Activated T-helper 1 cell treated with anti-CD3 and anti-CD28 coated beads, Interleukin-12 subunit alpha, Interleukin-12 subunit beta, Interleukin-2, Interleukin-4 antibody, amounts not matched to agents 30 ng/mL and 10 ng/mL and 1 ng/mL, durations not matched to agents 14 hours and 24 hours and 36 hours (primary cell): ENCODE measurements at regions of chr22 and their contacts with region 1.

Region 1: GRCh38 chr22:21867528-21868266 is at the start of gene MAPK1:
- DNase-seq: peak; percentile 89
- H3K4me3 Mint-ChIP-seq: peak within 1 kb of the TSS; percentile 94
- H3K27ac Mint-ChIP-seq: peak within 1 kb of the TSS; percentile 95
- H3K4me1 Mint-ChIP-seq: peaks cover 41% of the 10 kb centered on the region
- H3K27me3 Mint-ChIP-seq: peaks cover 15% of the 10 kb centered on the region
- total RNA-seq, gene MAPK1: 80.2 and 91.3 TPM in 2 replicates

Region 2: GRCh38 chr22:21712894-21713712 is 154.6 kb before region 1 on chr22:
- intact Hi-C with region 1: loop called (anchors 5 kb)
- DNase-seq: peak; percentile 36
- H3K4me3 Mint-ChIP-seq: no peak overlapping the region
- H3K27ac Mint-ChIP-seq: no peak overlapping the region
- H3K4me1 Mint-ChIP-seq: peaks cover 7% of the 10 kb centered on the region
- H3K27me3 Mint-ChIP-seq: peaks cover 9% of the 10 kb centered on the region

Region 3: GRCh38 chr22:21760640-21761039 is 107.1 kb before region 1 on chr22:
- intact Hi-C with region 1: loop called (anchors 1 kb)
- DNase-seq: no peak
- H3K4me3 Mint-ChIP-seq: no peak overlapping the region
- H3K27ac Mint-ChIP-seq: peak overlapping the region; percentile 25
- H3K4me1 Mint-ChIP-seq: peaks cover 57% of the 10 kb centered on the region
- H3K27me3 Mint-ChIP-seq: no peaks in the 10 kb centered on the region

Region 4: DNA sequence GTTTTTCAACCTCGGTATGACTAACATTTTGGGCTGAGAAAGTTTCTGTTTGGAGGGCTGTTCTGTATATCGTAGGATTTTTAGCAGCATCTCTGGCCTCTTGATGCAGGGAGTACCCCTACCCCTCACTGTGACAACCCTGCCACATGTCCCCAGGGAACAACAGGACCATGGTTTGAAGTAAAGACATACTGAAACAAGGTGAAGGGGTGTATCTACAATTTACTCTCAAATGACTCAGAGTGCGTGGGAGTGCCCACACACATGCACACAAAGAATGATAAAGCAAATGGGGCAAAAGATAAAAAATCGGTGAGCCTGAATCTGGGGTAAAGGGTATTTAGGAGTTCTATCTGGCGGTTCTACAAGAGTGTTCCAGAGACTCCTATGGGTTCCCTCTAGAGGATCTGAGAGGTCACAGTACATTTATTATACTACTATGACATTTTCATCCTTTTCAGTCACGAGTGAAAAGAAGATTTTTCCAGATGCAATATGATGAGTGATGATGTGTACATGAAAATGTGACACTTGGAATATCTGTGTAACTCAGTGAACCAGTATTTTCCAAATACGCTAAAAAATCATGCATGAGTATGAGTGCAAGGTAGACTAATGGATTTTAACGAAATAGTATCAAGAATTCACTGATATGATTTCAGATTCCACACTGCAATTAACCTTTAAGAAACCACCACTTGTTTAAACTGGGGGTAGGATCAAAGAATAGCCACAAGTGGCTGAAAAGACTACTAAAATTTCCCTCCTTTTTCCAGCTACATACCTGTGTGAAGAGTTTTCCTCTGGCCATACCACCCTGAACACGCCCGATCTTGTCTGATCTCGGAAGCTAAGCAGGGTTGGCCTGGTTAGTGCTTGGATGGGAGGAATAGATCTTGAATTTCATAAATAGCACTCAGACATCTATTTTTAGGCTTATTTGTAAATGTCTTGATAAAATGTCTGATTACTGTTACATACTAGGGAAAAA is 75.8 kb before region 1 on chr22:
- intact Hi-C with region 1: loop called (anchors 1 kb)
- DNase-seq: peak; percentile 12
- H3K4me3 Mint-ChIP-seq: no peak overlapping the region
- H3K27ac Mint-ChIP-seq: peak overlapping the region; percentile 72
- H3K4me1 Mint-ChIP-seq: peaks cover 12% of the 10 kb centered on the region
- H3K27me3 Mint-ChIP-seq: no peaks in the 10 kb centered on the region

Region 5: DNA sequence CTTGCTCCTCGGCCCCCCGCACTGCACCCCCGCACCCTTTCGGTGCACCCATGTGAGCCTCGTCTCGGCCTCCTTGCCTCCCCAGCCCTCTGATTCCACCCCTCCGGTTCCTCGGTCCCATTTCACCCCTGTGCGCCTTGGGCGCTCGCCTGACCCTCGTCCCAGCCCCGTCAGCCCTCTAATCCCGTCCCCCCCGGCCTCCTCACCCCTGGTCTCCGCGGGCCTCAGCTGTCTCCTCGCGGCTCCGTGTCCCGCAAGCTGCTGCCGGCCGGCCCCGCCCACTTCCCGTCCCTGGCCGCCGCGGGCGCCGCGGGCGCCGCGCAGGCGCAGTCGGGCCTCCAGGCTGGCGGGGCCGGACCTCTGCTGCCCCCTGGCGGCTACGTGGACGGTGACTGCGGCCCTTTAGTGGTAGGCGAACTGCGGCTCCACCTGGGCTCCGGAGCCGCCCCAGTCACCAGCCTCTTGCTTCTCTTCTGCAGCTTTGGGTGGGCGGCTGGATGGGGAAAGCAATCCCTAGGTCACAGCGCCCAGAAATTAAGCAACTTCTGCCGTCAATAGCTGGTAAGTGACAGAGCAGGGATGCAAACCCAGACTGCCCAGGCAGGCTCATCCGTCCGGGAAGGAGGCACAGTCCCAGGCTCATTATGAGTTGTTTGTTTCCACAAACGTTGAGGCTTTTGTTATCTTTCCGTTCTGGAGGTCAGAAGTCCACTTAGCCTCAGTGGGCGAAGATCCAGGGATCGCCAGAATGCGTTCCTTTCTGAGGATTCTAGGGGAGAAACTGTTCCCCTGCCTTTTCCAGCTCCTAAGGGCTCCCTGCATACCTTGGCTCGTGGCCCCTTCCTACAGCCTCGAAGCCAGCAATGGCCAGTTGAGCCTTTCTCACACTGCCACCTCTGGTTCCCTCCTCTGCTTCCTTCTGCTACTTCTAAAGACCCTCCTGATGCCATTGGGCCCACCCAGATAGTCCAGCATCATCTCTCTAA is 85.2 kb after region 1 on chr22 and contains the start of gene PPM1F:
- intact Hi-C with region 1: loop called (anchors 5 kb)
- DNase-seq: peak; percentile 88
- H3K4me3 Mint-ChIP-seq: peak within 1 kb of the TSS; percentile 79
- H3K27ac Mint-ChIP-seq: peak within 1 kb of the TSS; percentile 79
- H3K4me1 Mint-ChIP-seq: peaks cover 6% of the 10 kb centered on the region
- H3K27me3 Mint-ChIP-seq: no peaks in the 10 kb centered on the region
- total RNA-seq, gene PPM1F: 28.5 and 28.7 TPM in 2 replicates

Region 6: DNA sequence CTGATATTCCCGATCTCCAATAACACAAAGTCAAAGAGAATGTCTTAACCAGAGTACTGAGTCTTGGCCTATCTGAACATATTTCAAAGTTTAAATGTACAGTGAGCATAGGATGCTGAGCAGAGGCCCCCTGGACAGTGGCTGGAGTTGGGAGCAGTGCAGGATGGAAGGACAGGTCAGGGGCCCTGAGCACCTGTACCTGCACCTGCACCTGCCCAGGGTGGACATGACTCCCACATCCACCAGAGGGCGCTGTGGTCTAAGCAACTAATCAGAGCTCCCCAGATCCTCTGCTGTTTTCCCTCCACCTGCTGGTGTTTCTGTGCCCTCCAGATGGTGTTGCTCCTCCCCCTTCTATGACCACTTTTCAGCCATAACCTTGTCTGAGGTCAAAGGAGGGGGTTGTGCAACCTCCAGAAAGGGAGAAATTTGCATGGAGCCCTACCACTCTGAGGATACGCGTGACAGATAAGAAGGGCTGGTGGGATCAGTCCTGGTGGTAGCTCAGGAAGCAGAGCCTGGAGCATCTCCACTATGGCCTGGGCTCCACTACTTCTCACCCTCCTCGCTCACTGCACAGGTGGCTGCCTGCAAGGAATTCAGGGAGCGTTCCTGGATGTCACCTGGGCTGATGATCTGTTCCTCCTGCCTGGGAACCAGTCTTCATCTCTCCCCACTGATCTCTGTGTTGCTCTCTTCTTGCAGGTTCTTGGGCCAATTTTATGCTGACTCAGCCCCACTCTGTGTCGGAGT is 327.7 kb after region 1 on chr22:
- intact Hi-C with region 1: no loop called
- DNase-seq: peak; percentile 64
- H3K4me3 Mint-ChIP-seq: no peak overlapping the region
- H3K27ac Mint-ChIP-seq: no peak overlapping the region
- H3K4me1 Mint-ChIP-seq: no peaks in the 10 kb centered on the region
- H3K27me3 Mint-ChIP-seq: peaks cover 27% of the 10 kb centered on the region